Activated CD4-positive, alpha-beta memory T cell treated with anti-CD3 and anti-CD28 coated beads, Interleukin-2, amount 10 ng/mL, durations not matched to agents 7 days and 5 days (primary cell): ENCODE measurements at regions of chr16 and their contacts with region 1.

Region 1: DNA sequence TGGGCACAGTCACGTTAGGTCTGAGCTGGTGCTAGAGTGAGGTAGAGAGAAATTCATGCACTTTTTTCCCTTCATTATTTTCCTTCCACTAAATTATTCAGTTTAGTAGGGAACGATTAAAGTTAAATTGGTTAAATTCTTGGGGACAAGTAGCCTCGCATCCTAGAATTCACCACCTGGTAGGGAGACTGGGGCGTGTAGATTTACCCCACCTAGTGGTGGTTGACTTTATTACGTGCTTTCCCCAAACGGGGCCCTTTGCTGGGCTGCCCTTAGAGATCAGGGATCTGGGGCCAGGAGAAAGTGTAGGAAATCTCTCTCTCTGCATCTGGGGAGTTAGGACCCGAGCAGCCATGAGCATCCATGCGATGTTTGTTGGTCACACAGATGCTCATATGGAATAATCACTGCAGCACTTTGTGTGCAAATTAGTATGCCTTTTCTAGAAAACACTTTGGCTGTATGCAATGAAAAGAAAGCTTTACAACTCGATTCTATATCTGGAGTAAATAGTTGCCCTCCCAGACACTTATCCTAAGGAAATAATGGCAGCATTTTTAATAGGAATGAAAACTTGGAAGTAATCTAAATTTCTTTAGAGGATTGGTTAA is 107.0 kb downstream of the PLCG2 start:
- DNase-seq: peak; percentile 35
- H3K4me3 Mint-ChIP-seq: no peak overlapping the region
- H3K27ac Mint-ChIP-seq: no peak overlapping the region
- H3K4me1 Mint-ChIP-seq: peaks cover 3% of the 10 kb centered on the region
- H3K27me3 Mint-ChIP-seq: peaks cover 2% of the 10 kb centered on the region

Region 2: DNA sequence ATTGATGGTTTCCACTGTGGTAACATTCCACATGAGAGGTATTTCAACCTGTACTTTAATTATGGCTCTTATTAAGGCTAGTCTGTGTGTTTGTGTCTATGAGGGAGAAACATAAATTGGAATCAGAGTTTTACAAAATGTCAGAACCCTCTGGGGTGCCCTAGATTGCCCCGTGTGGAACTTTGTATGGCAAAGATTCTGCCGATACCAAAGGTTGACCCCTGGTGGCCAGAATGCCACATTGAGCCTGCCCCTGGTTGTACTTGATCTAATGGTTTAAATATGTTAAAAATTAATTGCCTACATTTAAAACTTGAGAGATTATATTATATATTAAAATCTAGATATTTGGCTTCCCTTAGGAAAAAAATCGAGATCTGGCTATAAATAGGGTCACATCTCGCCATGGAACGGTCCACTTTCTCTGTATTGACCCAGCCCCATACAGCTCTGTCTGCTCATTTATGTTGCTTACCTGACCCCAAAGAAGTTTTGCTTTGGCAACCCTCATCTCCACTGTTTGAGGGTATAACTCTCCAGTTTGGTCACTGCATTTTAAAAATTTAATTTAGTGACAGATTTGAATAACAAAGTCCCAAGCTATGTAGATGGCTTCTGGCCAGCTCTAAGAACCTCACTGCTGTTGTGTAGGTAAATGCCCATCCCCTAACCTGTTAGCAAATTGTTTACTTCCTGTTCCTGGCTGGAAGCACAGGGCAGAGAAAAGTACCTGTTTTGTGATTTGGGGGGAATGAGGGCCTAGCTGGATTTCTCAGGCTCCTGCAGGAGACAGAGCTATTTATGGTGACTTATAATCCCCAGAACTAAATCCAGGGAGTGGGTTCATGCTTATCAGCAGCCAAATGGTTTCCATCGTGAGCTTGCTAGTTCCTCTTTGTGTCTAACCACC is 12.0 kb before region 1 on chr16:
- CTCF ChIA-PET with region 1: interaction called, 34 read pairs
- POLR2A ChIA-PET with region 1: no interaction called
- DNase-seq: peak; percentile 68
- H3K4me3 Mint-ChIP-seq: no peak overlapping the region
- H3K27ac Mint-ChIP-seq: no peak overlapping the region
- H3K4me1 Mint-ChIP-seq: peaks cover 14% of the 10 kb centered on the region
- H3K27me3 Mint-ChIP-seq: no peaks in the 10 kb centered on the region

Region 3: GRCh38 chr16:82044585-82044911 is 158.5 kb after region 1 on chr16:
- CTCF ChIA-PET with region 1: no interaction called
- POLR2A ChIA-PET with region 1: no interaction called
- DNase-seq: no peak
- H3K4me3 Mint-ChIP-seq: no peak overlapping the region
- H3K27ac Mint-ChIP-seq: no peak overlapping the region
- H3K4me1 Mint-ChIP-seq: no peaks in the 10 kb centered on the region
- H3K27me3 Mint-ChIP-seq: peaks cover 18% of the 10 kb centered on the region